H1 (cell line): ENCODE measurements at regions of chr14 and their contacts with region 1.

Region 1: DNA sequence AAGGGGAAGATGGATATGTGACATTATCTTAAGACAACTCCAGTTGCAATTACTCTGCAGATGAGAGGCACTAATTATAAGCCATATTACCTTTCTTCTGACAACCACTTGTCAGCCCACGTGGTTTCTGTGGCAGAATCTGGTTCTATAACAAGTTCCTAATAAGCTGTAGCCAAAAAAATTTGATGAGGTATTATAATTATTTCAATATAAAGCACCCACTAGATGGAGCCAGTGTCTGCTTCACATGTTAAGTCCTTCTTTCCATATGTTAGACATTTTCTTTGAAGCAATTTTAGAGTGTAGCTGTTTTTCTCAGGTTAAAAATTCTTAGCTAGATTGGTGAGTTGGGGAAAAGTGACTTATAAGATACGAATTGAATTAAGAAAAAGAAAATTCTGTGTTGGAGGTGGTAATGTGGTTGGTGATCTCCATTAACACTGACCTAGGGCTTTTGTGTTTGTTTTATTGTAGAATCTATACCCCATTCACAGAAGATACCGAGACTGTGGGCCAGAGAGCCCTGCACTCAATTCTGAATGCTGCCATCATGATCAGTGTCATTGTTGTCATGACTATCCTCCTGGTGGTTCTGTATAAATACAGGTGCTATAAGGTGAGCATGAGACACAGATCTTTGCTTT is 36.9 kb downstream of the PSEN1 start:
- DNase-seq: no peak
- H3K4me3 ChIP-seq: no peak overlapping the region
- H3K27ac ChIP-seq: no peak overlapping the region
- H3K4me1 ChIP-seq: peaks cover 2 to 10% (median 6%) of the 10 kb centered on the region in 4 experiments; a peak in 6 of 7 replicates
- H3K27me3 ChIP-seq: no peaks in the 10 kb centered on the region
- CTCF ChIP-seq: peak in 2 of 3 experiments; percentile 25 to 29; a peak in 2 of 4 replicates
- EP300 ChIP-seq: no peak
- POLR2A ChIP-seq: no peak
- RAD21 ChIP-seq: peak; percentile 57 to 64

Region 2: DNA sequence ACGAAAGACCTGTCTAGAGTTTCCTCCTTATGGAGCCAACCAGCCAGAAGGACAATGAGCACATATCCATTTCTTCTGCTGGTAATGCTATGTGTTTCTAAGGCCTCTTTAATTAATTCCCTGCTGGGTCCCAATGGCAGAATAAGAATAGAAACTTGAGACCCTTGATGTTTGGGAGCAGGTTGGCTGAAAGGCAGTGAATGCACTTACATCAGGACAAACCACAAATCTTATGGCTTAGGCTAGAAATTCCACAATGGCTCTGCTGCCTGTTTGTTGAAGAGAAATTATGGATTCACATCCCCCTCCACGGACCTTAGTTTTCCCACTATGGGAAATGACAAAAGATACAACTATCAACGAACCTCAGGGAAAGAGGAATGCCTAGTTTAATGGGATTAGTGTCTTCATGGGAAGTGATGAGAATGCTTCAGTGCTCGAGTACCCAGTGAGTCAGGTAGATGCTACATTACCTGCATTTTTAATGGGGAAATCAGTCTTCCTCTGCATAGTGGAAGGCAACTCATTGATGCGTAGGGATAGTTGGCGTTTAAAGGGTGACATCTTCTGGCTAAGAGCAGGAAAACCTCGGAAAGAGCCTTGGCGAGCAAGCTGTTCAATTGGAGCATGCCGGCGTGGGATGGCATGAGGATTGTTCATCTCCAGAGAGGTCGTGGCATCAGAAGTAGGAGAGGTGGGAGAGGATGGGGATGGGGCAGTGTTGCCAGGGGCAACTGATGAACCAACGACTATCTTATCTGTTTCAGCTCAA is 110.6 kb after region 1 on chr14:
- CTCF ChIA-PET with region 1: interaction called, 18 read pairs
- POLR2A ChIA-PET with region 1: interaction called, 3 read pairs
- DNase-seq: peak in 1 of 2 experiments; percentile 44
- H3K4me3 ChIP-seq: peak overlapping the region in 1 of 4 experiments; percentile 8; a peak in 1 of 8 replicates
- H3K27ac ChIP-seq: no peak overlapping the region
- H3K4me1 ChIP-seq: peaks cover 3 to 28% (median 19%) of the 10 kb centered on the region in 4 experiments
- H3K27me3 ChIP-seq: no peaks in the 10 kb centered on the region
- CTCF ChIP-seq: peak; percentile 12 to 75 (median 59)
- EP300 ChIP-seq: no peak
- POLR2A ChIP-seq: no peak
- RAD21 ChIP-seq: peak; percentile 79 to 82